Stomach (tissue), 19 donors: ENCODE measurements at regions of chr10 and their contacts with region 1.

Region 1: GRCh38 chr10:22988581-22989360 is 60.9 kb downstream of the ARMC3 start:
- DNase-seq: peak; percentile 67 to 86
- H3K4me3 ChIP-seq: no peak overlapping the region
- H3K27ac ChIP-seq: no peak overlapping the region
- H3K4me1 ChIP-seq: peaks cover 0 to 31% (median 10%) of the 10 kb centered on the region in 4 donors
- H3K27me3 ChIP-seq: peaks cover 0 to 3% (median 0%) of the 10 kb centered on the region in 3 donors
- CTCF ChIP-seq: peak in 5 of 7 experiments; percentile 58 to 95 (median 89)
- EP300 ChIP-seq: no peak
- POLR2A ChIP-seq: no peak

Region 2: DNA sequence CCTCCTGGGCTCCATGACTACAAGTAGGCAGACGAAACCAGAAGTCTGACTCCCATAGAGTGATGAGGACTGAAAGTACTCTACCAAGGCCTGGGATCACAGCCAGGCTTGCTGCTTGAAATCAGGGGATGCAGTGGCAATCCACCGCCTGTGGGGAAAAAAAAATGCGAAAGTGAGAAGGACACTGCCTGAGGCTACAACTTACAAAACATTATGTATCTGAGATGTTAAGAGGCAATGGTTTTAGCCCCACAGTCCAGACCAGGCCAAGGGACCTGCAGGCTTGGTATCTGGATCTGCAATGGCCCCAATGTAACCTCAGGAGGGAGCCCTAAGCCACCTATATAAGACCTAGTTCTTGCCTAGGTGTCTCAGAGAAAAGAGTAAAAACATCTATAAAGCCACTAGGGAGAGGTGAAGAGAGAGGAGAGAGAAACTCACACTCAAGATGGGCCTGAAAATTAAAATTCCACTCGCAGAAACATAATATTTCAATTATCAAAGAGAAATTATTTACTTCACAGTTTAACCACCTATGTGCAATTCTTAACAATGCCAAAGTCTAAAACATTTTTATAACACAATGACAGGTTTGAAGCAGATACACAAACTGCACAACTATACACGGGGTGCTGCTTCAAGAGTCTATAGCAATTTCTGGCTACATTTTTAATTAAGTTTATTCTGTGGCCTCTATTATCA is 999.2 kb before region 1 on chr10:
- intact Hi-C with region 1: loop called (anchors 10 kb)
- DNase-seq: peak; percentile 42 to 81
- H3K4me3 ChIP-seq: no peak overlapping the region
- H3K27ac ChIP-seq: peak overlapping the region in 1 of 5 donors; percentile 56
- H3K4me1 ChIP-seq: peaks cover 0 to 31% (median 7%) of the 10 kb centered on the region in 4 donors
- H3K27me3 ChIP-seq: no peaks in the 10 kb centered on the region
- CTCF ChIP-seq: peak in 5 of 7 experiments; percentile 11 to 50 (median 26)
- EP300 ChIP-seq: no peak
- POLR2A ChIP-seq: no peak